Astrocyte of the cerebellum (primary cell): ENCODE measurements at regions of chr12 and their contacts with region 1.

Region 1: DNA sequence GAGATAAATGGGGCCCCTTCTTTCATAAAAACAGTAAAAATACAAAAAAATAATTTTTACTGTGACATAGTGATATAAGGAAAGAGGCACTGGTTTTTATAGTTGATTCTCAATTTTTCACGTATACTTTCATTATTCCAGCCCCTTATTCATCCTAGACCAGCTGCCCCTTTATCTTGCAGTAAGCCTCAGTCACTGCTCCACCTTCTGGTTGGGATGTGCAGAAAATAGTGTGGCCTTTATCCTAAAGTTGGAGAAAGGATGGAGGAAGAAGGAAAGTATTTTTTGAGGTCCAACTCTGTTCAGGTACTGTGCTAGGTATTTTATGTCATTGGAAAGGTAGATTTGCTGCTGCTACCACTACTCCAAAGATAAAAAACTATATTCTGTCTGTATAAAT is 172.7 kb downstream of the ANO6 start:
- DNase-seq: peak; percentile 43
- H3K4me3 ChIP-seq: no peak overlapping the region
- CTCF ChIP-seq: peak; percentile 81

Region 2: DNA sequence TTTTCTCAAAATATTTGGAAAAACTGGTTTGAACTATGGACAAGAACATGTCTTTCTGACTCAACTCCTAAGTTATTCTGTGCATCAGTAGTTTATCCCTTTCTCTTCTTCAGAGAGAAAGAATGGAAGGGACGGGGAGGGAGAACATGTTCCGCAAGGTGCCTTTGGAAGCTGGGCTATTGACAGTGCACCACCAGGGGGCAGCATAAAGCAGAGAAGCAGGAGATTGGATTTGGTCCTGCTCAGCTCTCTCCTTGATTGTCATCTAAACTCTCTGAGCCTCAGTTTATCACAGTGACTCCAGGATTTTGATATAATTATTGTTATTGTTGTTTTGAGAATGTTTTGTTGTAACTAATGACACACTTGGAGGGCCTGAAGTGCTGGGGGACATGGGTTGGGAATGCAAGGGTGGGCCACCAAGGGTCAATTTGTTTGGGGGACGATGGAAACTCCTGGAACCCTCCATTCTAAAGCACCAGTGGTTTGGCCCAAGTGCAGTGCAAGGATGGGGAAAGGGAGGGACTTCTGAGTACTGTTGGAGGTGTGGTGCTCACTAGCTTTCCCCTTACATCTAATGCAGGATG is 218.0 kb before region 1 on chr12:
- in situ Hi-C with region 1: loop called (anchors 10 kb)
- DNase-seq: peak; percentile 69
- H3K4me3 ChIP-seq: no peak overlapping the region
- CTCF ChIP-seq: peak; percentile 94

Region 3: DNA sequence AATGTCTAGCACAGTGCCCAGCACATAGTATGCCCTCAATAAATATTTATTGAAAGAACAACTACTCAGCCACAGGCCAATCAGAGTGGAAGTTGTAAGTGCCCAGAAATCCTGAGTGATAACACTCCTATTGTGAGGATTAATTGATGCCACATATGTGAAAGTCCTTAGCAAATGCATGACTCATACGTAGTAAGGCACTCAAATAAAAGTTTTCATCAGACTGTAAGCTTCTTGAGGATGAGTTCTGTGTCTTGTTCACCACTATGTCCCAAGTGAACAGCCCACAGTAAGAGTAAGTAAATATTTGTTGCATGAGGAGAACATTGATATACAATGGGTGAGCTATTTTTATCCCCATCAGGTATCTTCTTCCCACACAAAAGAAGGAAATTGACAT is 197.3 kb before region 1 on chr12:
- in situ Hi-C with region 1: no loop called
- DNase-seq: no peak
- H3K4me3 ChIP-seq: no peak overlapping the region
- CTCF ChIP-seq: no peak

Region 4: GRCh38 chr12:45435945-45436710 is 47.6 kb after region 1 on chr12:
- in situ Hi-C with region 1: no loop called
- DNase-seq: no peak
- H3K4me3 ChIP-seq: no peak overlapping the region
- CTCF ChIP-seq: no peak